Testis (tissue), 5 donors: ENCODE measurements at regions of chr1 and their contacts with region 1.

Region 1: DNA sequence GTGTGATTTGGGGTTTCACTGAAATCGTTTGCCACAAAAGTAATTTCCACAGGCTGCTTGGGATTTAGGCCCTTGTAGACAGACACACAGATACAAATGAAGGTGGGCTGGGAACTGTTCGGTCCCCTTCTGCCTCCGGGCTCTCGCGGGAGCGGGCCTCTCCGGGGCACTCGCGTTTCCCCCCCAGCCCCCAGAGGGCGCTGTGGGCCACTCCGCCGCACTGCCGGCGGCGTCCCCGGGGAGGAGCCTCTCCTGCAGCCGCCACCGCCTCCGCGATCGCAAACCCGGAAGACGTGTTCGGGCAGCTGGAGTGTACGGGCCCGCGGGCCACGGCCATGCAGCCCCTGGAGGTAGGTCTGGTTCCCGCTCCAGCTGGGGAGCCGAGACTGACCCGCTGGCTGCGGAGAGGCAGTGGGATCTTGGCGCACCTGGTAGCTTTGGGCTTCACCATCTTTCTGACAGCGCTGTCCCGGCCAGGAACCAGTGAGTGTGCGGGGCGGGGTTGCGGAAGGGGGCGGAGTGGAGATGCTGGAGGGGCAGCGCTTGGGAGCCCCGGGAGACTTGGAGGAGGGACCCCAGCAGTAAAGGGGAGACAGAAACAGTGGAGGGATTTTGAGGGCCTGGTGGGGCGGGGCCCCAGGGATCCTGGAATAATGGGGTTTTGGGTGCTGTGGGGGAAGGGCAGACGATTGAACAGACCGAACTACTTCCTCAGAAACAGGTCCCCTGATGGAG is at the start of gene CYB561D1:
- DNase-seq: peak; percentile 89
- H3K4me3 ChIP-seq: peak within 1 kb of the TSS; percentile 67 to 77
- H3K27ac ChIP-seq: peak within 1 kb of the TSS; percentile 6 to 68
- H3K4me1 ChIP-seq: peaks cover 39% of the 10 kb centered on the region
- H3K27me3 ChIP-seq: no peaks in the 10 kb centered on the region
- CTCF ChIP-seq: peak; percentile 86 to 90 (median 89)
- POLR2A ChIP-seq: no peak
- total RNA-seq, gene CYB561D1: 8.0 to 11.5 TPM

Region 2: GRCh38 chr1:109532365-109533136 is 38.6 kb after region 1 on chr1:
- intact Hi-C with region 1: loop called (anchors 5 kb)
- DNase-seq: peak; percentile 89
- H3K4me3 ChIP-seq: no peak overlapping the region
- H3K27ac ChIP-seq: peak overlapping the region; percentile 63 to 73
- H3K4me1 ChIP-seq: peaks cover 49% of the 10 kb centered on the region
- H3K27me3 ChIP-seq: no peaks in the 10 kb centered on the region
- CTCF ChIP-seq: peak; percentile 95 to 99 (median 99)
- POLR2A ChIP-seq: no peak

Region 3: DNA sequence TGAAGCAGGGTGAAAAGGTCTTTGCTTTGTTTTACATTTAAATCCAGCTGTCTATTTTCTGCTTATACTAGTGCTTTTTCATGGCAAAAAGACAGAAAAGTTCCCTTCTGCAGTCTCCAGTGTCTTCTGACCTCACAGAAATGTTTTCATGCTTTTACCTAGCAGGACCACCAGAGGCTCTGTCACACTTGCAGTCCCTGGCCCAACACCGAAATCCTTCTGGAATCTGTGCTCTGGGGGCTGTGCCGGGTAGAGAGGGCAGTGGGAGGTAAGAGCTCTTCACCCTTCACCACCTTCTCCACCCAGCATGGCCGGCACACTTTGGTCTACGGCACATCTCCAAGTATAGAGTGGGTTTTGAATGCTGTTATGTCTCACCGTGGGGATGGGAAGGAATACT is 104.7 kb after region 1 on chr1:
- intact Hi-C with region 1: no loop called
- DNase-seq: no peak
- H3K4me3 ChIP-seq: no peak overlapping the region
- H3K27ac ChIP-seq: no peak overlapping the region
- H3K4me1 ChIP-seq: no peaks in the 10 kb centered on the region
- H3K27me3 ChIP-seq: no peaks in the 10 kb centered on the region
- CTCF ChIP-seq: no peak
- POLR2A ChIP-seq: no peak

Region 4: DNA sequence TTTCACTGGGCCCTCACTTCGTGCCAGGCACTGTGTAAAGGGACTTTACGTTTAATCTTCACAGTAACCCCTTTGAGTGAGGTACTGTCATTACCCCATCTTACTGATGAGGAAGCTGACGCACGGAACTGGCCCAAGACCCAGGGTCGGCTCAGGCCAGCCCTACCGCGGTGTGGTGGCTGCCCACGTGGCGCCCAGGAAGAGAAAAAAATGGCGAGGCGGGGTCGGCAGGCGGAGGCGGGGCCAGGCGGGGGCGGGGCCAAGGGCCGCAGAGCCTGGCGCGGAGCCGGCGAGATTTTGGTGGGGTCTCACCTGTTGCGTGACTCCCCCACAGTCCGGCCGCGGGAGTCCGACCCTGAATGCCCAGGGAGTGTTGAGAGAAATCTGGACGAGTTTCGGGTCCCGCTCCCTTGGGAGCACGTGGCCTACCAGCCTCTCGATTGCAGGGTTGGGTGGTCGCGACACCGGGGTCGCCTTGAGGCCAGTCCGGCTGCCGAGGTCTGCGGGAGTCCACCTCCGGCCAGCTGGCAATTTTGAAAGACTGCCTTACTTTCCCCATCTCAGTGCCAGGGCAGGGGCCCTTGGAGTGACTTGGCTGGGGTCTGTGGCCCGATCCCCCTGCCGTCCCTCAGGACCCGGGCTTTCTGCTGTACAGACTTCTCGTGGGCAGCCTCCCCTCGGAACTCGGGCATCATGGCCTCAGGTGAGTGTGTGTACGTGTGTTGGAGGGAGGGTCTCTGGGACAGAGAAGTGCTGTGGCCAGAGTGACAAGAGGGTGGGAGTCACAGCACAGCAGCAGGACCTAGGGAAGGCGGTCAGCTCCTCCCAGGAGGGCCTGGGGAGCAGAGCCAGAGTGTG is 125.8 kb after region 1 on chr1 and contains the starts of genes AMPD2 and GNAT2:
- intact Hi-C with region 1: no loop called
- DNase-seq: peak; percentile 75
- H3K4me3 ChIP-seq: peak within 1 kb of the TSS; percentile 64 to 80
- H3K27ac ChIP-seq: peak within 1 kb of the TSS; percentile 68 to 87
- H3K4me1 ChIP-seq: peaks cover 38% of the 10 kb centered on the region
- H3K27me3 ChIP-seq: no peaks in the 10 kb centered on the region
- CTCF ChIP-seq: no peak
- POLR2A ChIP-seq: no peak
- total RNA-seq, gene AMPD2: 54.4 to 54.5 TPM
- total RNA-seq, gene GNAT2: 2.8 to 3.0 TPM